ENCODE measurements at regions of chr3 and their contacts with region 1.

Region 1: DNA sequence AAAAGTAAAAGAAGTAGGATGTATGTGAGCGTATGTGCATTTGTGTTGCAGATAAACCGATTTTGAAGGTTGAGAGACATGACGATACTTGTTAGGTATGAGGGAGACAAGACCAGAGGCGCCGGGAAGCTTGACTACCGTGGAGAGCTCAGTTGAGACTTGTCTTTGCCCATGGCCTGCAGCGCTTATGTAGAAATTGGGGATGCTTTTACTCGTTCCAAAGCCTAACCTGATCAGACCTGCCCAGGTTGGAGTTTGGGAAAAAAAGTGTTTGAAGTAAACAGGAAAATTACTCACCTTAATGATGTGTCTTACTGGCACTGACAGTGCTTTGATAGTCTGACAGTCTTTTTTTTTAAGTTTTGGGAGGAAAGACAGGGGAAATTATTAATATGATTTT is 202.8 kb downstream of the TP63 start:
- DNase-seq: no peak
- ATAC-seq: no peak
- H3K4me3 ChIP-seq: no peak overlapping the region
- H3K27ac ChIP-seq: no peak overlapping the region
- H3K4me1 ChIP-seq: no peaks in the 10 kb centered on the region
- H3K27me3 ChIP-seq: peaks cover 5% of the 10 kb centered on the region; the same call in 1 of the 2 replicates
- CTCF ChIP-seq: no peak
- POLR2A ChIP-seq: no peak
- RAD21 ChIP-seq: no peak

Region 2: GRCh38 chr3:189806180-189806951 is 27.6 kb before region 1 on chr3:
- CTCF ChIA-PET with region 1: no interaction called
- POLR2A ChIA-PET with region 1: no interaction called
- dilution Hi-C with region 1: no loop called
- in situ Hi-C with region 1: no loop called
- intact Hi-C with region 1: loop called (anchors 2 kb)
- DNase-seq: peak; percentile 6
- ATAC-seq: peak; percentile 51
- H3K4me3 ChIP-seq: no peak overlapping the region
- H3K27ac ChIP-seq: no peak overlapping the region
- H3K4me1 ChIP-seq: peaks cover 2% of the 10 kb centered on the region; the same call in 1 of the 2 replicates
- H3K27me3 ChIP-seq: no peaks in the 10 kb centered on the region; the same call in 1 of the 2 replicates
- CTCF ChIP-seq: no peak
- POLR2A ChIP-seq: no peak
- RAD21 ChIP-seq: no peak

Region 3: DNA sequence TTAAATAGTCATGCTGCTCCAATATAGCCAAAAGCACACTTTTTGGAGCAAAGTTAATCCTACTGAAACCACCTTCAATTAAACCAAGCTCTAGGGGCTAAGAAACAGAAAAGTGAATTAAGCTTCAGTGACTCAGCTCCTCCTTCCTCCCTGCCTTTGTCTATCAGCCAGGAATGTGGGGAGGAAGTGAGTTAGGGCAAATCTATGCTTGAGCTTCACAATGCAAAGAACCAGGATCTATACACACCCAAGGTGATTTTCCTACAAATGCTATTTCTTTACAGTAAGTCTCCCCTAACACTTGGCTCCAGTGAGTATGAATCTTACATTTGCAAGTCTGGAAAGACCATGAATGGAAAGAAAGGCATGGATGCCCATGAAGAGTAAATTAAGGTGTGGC is 74.7 kb after region 1 on chr3:
- CTCF ChIA-PET with region 1: interaction called, 12 read pairs
- POLR2A ChIA-PET with region 1: no interaction called
- dilution Hi-C with region 1: no loop called
- in situ Hi-C with region 1: no loop called
- intact Hi-C with region 1: no loop called
- DNase-seq: peak; percentile 72
- ATAC-seq: peak; percentile 83
- H3K4me3 ChIP-seq: no peak overlapping the region
- H3K27ac ChIP-seq: no peak overlapping the region
- H3K4me1 ChIP-seq: peaks cover 1% of the 10 kb centered on the region; the same call in 1 of the 2 replicates
- H3K27me3 ChIP-seq: no peaks in the 10 kb centered on the region
- CTCF ChIP-seq: no peak
- POLR2A ChIP-seq: no peak
- RAD21 ChIP-seq: no peak

Measured in IMR-90 (cell line).